ENCODE measurements at regions of chr12 and their contacts with region 1.

Region 1: DNA sequence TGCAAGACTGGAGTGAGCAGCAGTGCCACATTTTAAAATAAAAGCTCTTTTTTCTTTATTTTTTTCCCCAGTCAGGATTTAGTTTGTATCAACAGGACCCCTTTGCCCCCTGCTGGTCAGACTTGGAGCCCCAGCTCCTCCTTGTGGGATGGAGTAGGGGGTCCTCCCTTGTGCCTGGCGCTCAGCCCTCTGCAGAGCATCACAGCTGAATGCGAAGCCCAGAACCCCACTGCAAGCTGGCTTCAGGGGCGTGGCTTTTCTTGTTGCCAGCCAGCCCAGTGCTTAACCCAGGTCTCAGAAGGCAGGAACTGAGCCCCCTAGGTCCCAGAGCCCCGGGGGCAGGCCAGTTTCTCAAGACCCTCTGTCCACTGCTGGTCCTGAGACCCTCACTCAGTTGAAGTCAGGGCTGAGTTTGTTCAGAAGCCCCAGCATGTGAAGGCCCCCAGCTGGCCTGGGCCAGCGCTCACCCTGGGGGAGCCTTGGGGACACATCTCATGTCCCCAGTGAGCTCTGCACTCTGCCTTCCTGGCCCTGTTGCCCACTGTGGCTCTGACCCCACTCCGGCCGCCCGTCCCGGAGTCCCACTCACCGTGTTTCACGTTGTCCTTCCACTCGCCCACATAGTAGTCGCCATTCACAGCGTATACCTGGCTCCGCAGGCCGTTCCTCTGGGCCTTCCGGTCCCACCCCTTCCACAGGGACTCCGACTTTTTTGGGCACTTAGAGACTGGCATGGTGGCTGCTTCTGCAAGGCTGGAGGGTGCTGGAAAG is 519 bp downstream of the MORN3 start:
- DNase-seq: peak; percentile 17
- H3K4me3 Mint-ChIP-seq: no peak overlapping the region
- H3K27ac Mint-ChIP-seq: peak overlapping the region; percentile 40
- H3K4me1 Mint-ChIP-seq: peaks cover 44% of the 10 kb centered on the region
- H3K27me3 Mint-ChIP-seq: no peaks in the 10 kb centered on the region

Region 2: DNA sequence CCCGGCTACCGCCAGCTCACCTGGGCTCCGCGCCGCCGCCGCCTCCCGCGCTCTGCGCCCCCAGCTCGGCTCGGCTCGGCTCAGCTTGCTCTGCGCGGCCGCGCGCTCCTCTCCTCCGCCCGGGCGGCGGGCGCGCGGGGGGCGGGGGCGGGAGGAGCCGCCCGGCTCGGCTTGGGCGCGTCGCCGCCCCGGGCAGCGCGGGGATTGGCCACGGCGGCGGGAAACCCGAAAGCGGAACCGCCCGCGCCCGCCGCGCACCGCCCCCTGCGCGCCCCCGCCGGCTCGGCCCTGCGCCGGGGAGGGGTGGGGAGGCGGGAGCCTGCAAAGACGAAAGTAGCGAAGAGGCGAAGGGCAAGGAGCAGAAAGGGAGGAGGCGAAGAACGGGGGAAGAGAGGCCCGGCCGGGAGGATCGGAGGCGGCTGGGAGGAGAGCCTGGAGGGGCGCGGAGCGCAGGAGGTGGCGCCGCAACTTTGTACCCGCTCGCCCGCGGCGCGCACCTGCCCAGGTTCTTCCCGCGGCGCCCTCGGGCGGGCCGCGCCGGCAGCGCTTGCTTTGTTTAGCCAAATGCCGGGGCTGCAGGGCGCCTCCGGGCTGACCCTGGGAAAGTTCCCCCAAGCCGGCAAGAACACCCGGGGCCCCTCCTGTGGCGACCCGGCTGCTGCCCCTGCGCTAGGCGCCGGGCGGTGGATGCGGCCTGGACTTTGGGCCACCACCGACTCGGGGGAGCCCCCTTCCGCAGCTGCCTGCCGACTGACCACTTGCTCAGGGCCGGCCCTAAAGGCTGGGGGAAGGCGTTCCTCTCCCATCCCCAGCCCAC is 372.1 kb before region 1 on chr12 and contains the start of gene CAMKK2:
- intact Hi-C with region 1: loop called (anchors 5 kb)
- DNase-seq: peak; percentile 91
- H3K4me3 Mint-ChIP-seq: peak within 1 kb of the TSS; percentile 94
- H3K27ac Mint-ChIP-seq: peak within 1 kb of the TSS; percentile 88
- H3K4me1 Mint-ChIP-seq: peaks cover 35% of the 10 kb centered on the region
- H3K27me3 Mint-ChIP-seq: no peaks in the 10 kb centered on the region
- total RNA-seq, gene CAMKK2: 38.1 and 41.0 TPM in 2 replicates

Region 3: GRCh38 chr12:121536899-121537813 is 131.8 kb before region 1 on chr12:
- intact Hi-C with region 1: loop called (anchors 5 kb)
- DNase-seq: peak; percentile 41
- H3K4me3 Mint-ChIP-seq: peak overlapping the region; percentile 76
- H3K27ac Mint-ChIP-seq: peak overlapping the region; percentile 12
- H3K4me1 Mint-ChIP-seq: peaks cover 34% of the 10 kb centered on the region
- H3K27me3 Mint-ChIP-seq: peaks cover 4% of the 10 kb centered on the region

Region 4: GRCh38 chr12:121590476-121591143 is 78.3 kb before region 1 on chr12:
- intact Hi-C with region 1: loop called (anchors 1 kb)
- DNase-seq: peak; percentile 64
- H3K4me3 Mint-ChIP-seq: peak overlapping the region; percentile 80
- H3K27ac Mint-ChIP-seq: peak overlapping the region; percentile 95
- H3K4me1 Mint-ChIP-seq: peaks cover 26% of the 10 kb centered on the region
- H3K27me3 Mint-ChIP-seq: no peaks in the 10 kb centered on the region

Region 5: DNA sequence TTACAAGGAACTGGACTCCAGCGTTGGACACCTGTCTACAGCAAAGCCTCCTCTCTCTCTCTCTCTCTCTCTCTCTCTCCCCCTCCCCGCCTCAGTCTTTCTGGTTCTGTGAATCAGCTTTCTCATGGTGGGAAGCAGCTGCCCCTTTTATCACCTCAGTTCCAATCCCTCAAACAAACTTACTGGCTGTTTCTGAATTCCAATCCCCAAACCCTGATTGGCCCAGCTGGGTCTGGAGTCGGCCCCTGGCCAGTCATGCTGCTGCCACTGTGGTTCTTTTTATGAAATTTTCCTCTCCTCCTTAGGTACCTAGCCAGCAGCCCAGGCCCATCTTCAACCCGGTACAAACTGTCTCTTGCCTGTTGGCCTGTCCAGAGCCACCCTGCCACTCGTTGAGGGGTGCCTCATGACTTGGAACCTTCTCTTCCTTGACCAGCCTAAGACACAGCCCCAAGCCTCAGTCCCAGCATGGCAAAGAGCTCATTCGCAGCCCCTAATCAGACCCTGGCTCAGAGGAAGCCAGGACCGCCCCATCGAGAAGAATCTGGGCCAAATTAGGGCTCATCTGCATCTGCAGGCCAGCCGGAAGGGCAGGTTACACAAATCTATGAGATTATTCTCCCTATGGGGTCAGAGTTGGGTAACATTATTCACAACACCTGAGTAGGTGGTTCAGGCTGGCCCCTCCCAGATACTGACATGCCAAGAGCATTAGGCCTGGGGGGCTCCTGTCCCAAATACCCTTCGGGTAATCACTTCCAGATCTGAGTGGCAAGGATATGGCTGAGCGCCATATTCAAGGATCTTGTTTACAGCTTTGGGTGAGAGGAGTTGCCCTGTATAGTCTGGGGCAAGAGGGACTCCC is 10.0 kb after region 1 on chr12:
- intact Hi-C with region 1: loop called (anchors 1 kb)
- DNase-seq: no peak
- H3K4me3 Mint-ChIP-seq: no peak overlapping the region
- H3K27ac Mint-ChIP-seq: no peak overlapping the region
- H3K4me1 Mint-ChIP-seq: peaks cover 5% of the 10 kb centered on the region
- H3K27me3 Mint-ChIP-seq: no peaks in the 10 kb centered on the region

Region 6: DNA sequence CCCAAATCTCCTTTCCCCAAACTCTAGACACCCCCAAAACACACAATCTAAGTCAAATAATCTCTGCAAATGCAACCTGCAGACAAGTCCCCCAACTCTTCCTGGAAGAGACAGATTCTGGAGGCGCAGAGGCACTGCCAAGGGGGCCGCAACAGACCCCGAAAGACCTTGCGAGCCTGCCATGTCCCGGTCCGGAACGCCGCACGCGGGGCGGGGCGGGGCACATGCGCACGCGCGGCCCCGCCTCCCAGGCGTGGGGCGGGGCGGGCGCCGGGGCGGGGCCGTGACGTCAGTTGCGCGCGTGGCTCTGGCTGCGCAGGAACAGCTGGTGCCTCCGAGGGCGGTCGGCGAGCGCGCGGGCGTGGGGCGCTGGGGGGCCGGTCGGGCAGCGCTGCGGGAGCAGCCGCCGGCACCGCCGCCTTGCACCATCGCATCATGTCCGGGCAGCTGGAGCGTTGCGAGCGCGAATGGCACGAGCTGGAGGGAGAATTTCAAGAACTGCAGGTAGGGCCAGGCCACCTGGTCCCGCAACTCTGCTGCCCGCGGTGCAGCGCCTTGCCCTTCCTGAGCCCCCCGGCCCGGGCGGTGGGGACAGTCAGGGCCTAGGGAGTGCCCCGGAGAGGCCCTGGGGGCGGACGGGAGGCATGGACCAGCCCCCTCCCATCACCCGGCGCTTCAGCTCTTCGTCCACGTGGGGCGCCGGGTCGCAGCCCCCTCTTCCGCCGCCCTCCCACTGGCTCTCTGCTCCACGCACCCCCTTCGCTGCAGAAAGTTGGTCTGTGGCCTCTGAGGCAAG is 43.7 kb after region 1 on chr12 and contains the start of gene TMEM120B:
- intact Hi-C with region 1: loop called (anchors 1 kb)
- DNase-seq: peak; percentile 83
- H3K4me3 Mint-ChIP-seq: peak within 1 kb of the TSS; percentile 97
- H3K27ac Mint-ChIP-seq: peak within 1 kb of the TSS; percentile 91
- H3K4me1 Mint-ChIP-seq: peaks cover 28% of the 10 kb centered on the region
- H3K27me3 Mint-ChIP-seq: peaks cover 4% of the 10 kb centered on the region
- total RNA-seq, gene TMEM120B: 17.5 and 18.3 TPM in 2 replicates